Psoas muscle (tissue), 8 donors: ENCODE measurements at regions of chr14 and their contacts with region 1.

Region 1: GRCh38 chr14:64986578-64987571 is at the start of gene FNTB:
- DNase-seq: peak; percentile 97 to 98
- ATAC-seq: peak; percentile 96 to 97 (median 97)
- H3K4me3 ChIP-seq: peak within 1 kb of the TSS; percentile 84
- H3K27ac ChIP-seq: peak within 1 kb of the TSS; percentile 90
- H3K4me1 ChIP-seq: peaks cover 15% of the 10 kb centered on the region
- H3K27me3 ChIP-seq: no peaks in the 10 kb centered on the region
- CTCF ChIP-seq: peak; percentile 80
- total RNA-seq, gene FNTB: 18.8 to 28.8 (median 20.1) TPM

Region 2: GRCh38 chr14:64928239-64929013 is 58.4 kb before region 1 on chr14:
- intact Hi-C with region 1: loop called in 1 of 2 experiments (anchors 5 kb)
- DNase-seq: no peak
- ATAC-seq: no peak
- H3K4me3 ChIP-seq: no peak overlapping the region
- H3K27ac ChIP-seq: peak overlapping the region; percentile 72
- H3K4me1 ChIP-seq: peaks cover 40% of the 10 kb centered on the region
- H3K27me3 ChIP-seq: no peaks in the 10 kb centered on the region
- CTCF ChIP-seq: no peak

Region 3: DNA sequence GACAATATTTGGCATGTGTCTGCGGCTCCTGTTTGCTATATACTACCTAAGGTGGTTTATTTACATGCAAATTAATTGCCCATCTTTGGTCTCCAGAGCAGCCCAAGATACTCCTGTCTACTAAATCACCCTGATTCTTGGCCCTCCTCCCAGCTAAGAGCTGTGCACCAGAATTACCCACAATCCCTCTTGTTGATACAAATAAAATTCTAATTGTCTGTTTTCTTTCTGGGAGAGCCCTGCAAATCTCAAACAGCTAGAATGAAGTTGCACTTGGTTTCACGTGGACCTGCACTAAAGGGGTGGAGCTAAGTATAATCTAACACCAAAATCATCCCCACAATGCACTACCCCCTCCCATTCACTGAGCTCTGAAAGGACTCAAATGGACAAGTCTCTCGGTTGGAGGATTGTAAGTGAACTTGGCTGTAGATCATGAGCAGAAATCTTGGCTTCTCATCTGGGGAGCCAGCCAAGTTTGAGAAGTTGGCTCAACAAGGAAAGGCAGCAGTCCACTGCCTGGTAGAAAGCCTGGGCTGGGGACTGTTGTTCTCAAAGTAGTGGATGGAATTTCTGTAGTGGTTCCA is 108.8 kb after region 1 on chr14:
- intact Hi-C with region 1: loop called in 1 of 2 experiments (anchors 5 kb)
- DNase-seq: peak; percentile 55 to 74
- ATAC-seq: peak; percentile 77 to 90 (median 81)
- H3K4me3 ChIP-seq: peak overlapping the region; percentile 31
- H3K27ac ChIP-seq: peak overlapping the region; percentile 64
- H3K4me1 ChIP-seq: peaks cover 95% of the 10 kb centered on the region
- H3K27me3 ChIP-seq: no peaks in the 10 kb centered on the region
- CTCF ChIP-seq: no peak

Region 4: GRCh38 chr14:65412032-65412846 is 425.4 kb after region 1 on chr14 and contains the start of gene FUT8:
- intact Hi-C with region 1: loop called in 1 of 2 experiments (anchors 5 kb)
- DNase-seq: peak; percentile 97 to 99
- ATAC-seq: peak; percentile 93 to 96 (median 94)
- H3K4me3 ChIP-seq: peak within 1 kb of the TSS; percentile 80
- H3K27ac ChIP-seq: peak within 1 kb of the TSS; percentile 81
- H3K4me1 ChIP-seq: peaks cover 5% of the 10 kb centered on the region
- H3K27me3 ChIP-seq: no peaks in the 10 kb centered on the region
- CTCF ChIP-seq: peak; percentile 63
- total RNA-seq, gene FUT8: 4.1 to 8.6 (median 6.7) TPM